Activated CD4-positive, alpha-beta memory T cell treated with anti-CD3 and anti-CD28 coated beads for 36 hours (primary cell): ENCODE measurements at regions of chr5 and their contacts with region 1.

Region 1: DNA sequence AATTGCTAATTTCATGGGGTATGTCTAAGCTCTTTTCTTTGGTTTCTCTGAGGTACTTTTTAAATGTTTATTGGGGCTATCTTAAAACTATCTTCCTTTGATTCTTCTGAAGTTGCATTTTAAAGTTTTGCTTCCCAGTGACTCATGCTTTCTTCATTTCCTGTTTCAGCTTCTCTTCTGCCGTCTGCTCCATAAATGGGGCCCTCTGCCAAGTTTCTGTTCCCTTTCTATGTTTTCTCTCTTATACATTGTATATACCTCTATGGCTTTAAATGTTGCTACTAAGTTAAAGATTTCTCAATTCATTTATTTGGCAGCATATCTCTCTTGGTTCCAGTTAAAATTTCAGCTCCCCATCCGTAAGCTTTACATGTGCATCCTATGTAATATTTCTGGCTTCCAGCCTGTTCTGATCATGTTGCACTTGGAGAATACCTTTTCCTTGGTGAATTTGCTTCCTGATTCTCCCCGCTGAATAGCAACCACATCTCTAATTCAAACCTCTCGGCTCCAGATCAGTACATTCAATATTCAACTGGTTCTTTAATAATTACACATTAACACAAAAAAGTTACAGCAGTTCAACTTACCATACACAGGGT is 125.3 kb downstream of the ST8SIA4 start:
- DNase-seq: peak; percentile 34
- H3K4me3 Mint-ChIP-seq: no peak overlapping the region
- H3K27ac Mint-ChIP-seq: peak overlapping the region; percentile 71
- H3K4me1 Mint-ChIP-seq: peaks cover 36% of the 10 kb centered on the region
- H3K27me3 Mint-ChIP-seq: no peaks in the 10 kb centered on the region

Region 2: GRCh38 chr5:99349787-99350186 is 1428.0 kb before region 1 on chr5:
- CTCF ChIA-PET with region 1: no interaction called
- POLR2A ChIA-PET with region 1: no interaction called
- intact Hi-C with region 1: no loop called
- DNase-seq: no peak
- H3K4me3 Mint-ChIP-seq: no peak overlapping the region
- H3K27ac Mint-ChIP-seq: no peak overlapping the region
- H3K4me1 Mint-ChIP-seq: no peaks in the 10 kb centered on the region
- H3K27me3 Mint-ChIP-seq: no peaks in the 10 kb centered on the region

Region 3: DNA sequence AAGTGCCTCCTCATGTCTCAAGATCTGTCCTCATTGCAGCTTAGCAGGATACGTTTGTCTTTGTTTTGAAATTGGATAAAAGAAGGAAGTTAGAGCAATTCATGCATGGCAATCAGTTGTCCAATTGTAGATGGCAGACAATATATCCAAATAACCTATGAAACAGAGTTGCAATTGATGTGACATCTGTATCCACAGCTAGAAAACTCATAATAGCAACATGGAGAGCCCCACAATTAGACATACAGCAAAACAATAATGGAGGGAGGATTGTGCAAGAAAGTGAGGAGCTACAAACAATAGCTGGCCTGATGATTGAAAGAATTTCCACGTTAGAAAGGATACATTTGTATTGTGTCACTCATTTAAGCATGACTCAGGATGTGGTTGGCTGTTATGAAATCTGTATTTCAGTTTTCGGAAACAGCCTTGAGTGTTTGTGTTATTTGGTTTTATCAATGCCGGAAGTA is 110.6 kb before region 1 on chr5:
- CTCF ChIA-PET with region 1: no interaction called
- POLR2A ChIA-PET with region 1: no interaction called
- intact Hi-C with region 1: loop called (anchors 5 kb)
- DNase-seq: no peak
- H3K4me3 Mint-ChIP-seq: no peak overlapping the region
- H3K27ac Mint-ChIP-seq: no peak overlapping the region
- H3K4me1 Mint-ChIP-seq: peaks cover 10% of the 10 kb centered on the region
- H3K27me3 Mint-ChIP-seq: no peaks in the 10 kb centered on the region

Region 4: DNA sequence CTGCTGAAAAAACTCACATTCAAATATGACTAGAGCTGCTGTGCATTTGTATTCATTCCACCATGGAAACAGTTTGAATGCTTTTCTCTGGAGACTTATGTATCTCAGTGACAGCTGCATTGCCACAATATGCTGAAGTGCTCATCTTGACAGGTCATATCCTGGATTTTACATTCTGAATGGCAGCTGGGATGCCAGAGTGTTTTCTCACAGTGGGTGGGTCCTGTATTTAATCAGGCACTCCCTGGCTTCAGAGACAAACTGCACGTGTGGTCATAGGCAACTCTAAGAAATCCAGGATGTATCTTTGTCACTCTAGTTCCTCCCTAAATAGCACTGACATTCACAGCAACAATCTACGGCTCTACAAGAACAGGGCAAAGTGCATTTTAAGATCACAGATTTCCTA is 49.7 kb after region 1 on chr5:
- CTCF ChIA-PET with region 1: no interaction called
- POLR2A ChIA-PET with region 1: no interaction called
- intact Hi-C with region 1: loop called (anchors 1 kb)
- DNase-seq: peak; percentile 23
- H3K4me3 Mint-ChIP-seq: no peak overlapping the region
- H3K27ac Mint-ChIP-seq: peak overlapping the region; percentile 79
- H3K4me1 Mint-ChIP-seq: peaks cover 43% of the 10 kb centered on the region
- H3K27me3 Mint-ChIP-seq: no peaks in the 10 kb centered on the region

Region 5: DNA sequence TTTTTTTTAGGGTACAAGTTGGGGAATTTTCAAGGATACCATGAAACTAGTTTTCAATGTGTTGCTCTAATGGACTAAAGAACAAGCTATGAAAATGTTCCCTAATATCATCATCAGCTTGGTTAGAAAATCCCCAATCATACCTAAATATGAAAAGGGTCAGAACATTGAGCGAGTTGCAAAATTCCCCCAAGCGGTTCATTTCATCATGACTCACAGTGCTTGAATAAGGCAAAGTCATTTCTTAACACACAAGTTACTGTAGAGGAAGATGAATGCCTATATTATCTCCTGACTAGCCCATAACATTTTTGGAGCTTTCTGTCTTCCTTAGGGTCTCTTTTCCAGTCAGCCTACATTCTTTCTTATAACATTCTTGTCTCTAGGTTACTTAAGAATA is 62.6 kb after region 1 on chr5:
- CTCF ChIA-PET with region 1: interaction called, 4 read pairs
- POLR2A ChIA-PET with region 1: interaction called, 4 read pairs
- intact Hi-C with region 1: loop called (anchors 1 kb)
- DNase-seq: peak; percentile 52
- H3K4me3 Mint-ChIP-seq: no peak overlapping the region
- H3K27ac Mint-ChIP-seq: peak overlapping the region; percentile 86
- H3K4me1 Mint-ChIP-seq: peaks cover 67% of the 10 kb centered on the region
- H3K27me3 Mint-ChIP-seq: no peaks in the 10 kb centered on the region

Region 6: GRCh38 chr5:100852988-100853449 is 75.2 kb after region 1 on chr5:
- CTCF ChIA-PET with region 1: no interaction called
- POLR2A ChIA-PET with region 1: no interaction called
- intact Hi-C with region 1: loop called (anchors 2 kb)
- DNase-seq: no peak
- H3K4me3 Mint-ChIP-seq: peak overlapping the region; percentile 69
- H3K27ac Mint-ChIP-seq: peak overlapping the region; percentile 95
- H3K4me1 Mint-ChIP-seq: peaks cover 40% of the 10 kb centered on the region
- H3K27me3 Mint-ChIP-seq: no peaks in the 10 kb centered on the region

Region 7: DNA sequence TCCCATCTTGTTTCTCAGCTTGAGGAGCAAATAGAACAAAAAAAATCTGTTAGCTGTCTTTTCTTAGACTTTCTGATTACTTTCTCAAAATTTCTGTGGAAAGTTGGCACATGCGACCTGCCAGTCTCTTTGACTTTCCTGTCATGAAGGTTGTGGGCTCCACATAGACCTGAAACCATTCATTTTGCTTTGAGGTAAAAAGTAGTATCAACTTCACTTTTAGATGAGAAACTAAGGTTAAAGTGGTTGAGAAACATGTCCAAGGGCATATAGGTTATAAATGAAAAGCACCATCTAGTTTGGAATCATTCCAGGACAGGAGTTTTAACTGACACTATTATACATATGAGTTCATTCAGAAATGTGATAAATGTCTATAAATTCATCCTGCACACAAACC is 82.6 kb after region 1 on chr5:
- CTCF ChIA-PET with region 1: no interaction called
- POLR2A ChIA-PET with region 1: no interaction called
- intact Hi-C with region 1: loop called (anchors 1 kb)
- DNase-seq: peak; percentile 26
- H3K4me3 Mint-ChIP-seq: no peak overlapping the region
- H3K27ac Mint-ChIP-seq: peak overlapping the region; percentile 80
- H3K4me1 Mint-ChIP-seq: peaks cover 65% of the 10 kb centered on the region
- H3K27me3 Mint-ChIP-seq: no peaks in the 10 kb centered on the region

Region 8: GRCh38 chr5:101045689-101046088 is 267.9 kb after region 1 on chr5:
- CTCF ChIA-PET with region 1: interaction called, 4 read pairs
- POLR2A ChIA-PET with region 1: no interaction called
- intact Hi-C with region 1: loop called (anchors 2 kb)
- DNase-seq: no peak
- H3K4me3 Mint-ChIP-seq: no peak overlapping the region
- H3K27ac Mint-ChIP-seq: no peak overlapping the region
- H3K4me1 Mint-ChIP-seq: peaks cover 2% of the 10 kb centered on the region
- H3K27me3 Mint-ChIP-seq: no peaks in the 10 kb centered on the region